Activated CD4-positive, alpha-beta memory T cell treated with anti-CD3 and anti-CD28 coated beads for 36 hours (primary cell): ENCODE measurements at regions of chr7 and their contacts with region 1.

Region 1: GRCh38 chr7:39686261-39686924 is 63.0 kb downstream of the RALA start:
- DNase-seq: no peak
- H3K4me3 Mint-ChIP-seq: no peak overlapping the region
- H3K27ac Mint-ChIP-seq: peak overlapping the region; percentile 54
- H3K4me1 Mint-ChIP-seq: peaks cover 37% of the 10 kb centered on the region
- H3K27me3 Mint-ChIP-seq: no peaks in the 10 kb centered on the region

Region 2: DNA sequence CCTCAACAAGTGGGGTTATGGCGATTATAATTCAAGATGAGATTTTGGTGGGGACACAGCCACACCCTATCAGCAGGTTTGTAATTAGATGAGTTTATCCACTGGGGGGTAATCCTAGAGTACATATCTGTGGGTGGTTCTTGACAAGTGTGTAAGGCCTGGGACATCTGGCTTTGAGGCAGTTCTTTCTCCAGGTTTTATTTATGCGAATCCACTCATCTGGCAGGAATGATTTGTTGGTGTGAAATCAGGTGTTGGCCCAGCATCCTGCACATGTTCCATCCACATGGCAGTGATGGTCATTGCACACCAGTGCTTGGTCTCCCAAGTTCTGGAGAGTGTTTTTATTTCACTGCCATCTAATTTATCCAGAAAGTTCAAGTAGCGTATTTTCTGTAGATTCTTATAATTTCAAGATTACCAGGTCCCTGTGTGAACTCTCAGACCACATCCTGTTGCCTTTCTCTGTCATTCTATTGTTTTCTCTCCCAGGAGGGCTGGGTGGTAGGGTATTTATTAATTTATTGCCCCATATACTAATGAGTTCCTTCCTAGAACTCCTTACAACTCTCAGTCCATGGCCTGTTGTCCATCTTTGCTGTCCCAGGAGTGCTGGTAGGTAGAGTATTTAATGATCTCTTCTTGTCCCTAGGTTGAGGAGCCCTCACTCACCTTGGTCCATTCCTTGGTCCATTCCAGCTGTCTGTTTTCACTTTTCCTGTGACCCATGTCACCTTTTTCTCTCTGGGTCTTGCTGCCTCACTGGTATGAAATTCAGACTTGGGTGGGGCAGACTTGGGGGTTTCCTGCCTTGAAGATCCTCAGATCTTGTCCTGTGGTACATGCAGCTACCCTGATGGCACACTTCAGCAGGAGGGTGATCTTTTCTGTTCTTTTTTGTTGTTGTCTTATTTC is 52.6 kb before region 1 on chr7:
- CTCF ChIA-PET with region 1: interaction called, 3 read pairs
- POLR2A ChIA-PET with region 1: no interaction called
- intact Hi-C with region 1: loop called (anchors 5 kb)
- DNase-seq: no peak
- H3K4me3 Mint-ChIP-seq: no peak overlapping the region
- H3K27ac Mint-ChIP-seq: peak overlapping the region; percentile 75
- H3K4me1 Mint-ChIP-seq: peaks cover 69% of the 10 kb centered on the region
- H3K27me3 Mint-ChIP-seq: no peaks in the 10 kb centered on the region